PC-9 (cell line): ENCODE measurements at regions of chr10 and their contacts with region 1.

Region 1: DNA sequence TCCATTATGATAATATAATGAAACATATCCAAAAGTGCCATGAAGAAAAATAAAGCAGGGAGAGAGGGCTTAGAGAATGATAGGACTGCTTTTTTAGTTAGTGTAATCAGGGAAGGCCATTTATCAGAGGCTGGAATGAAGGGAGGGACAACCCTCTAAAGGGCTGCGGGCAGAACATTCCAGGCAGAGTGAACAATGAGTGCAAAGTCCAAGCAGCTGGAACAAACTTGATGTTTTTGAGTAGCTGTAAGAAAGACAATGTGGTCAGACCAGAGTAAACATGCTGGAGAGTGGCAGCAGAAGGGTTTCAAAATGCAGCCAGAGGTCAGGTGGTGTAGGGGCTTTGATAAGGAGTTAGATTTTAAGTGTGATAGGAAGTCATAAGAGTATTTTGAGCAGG is 65.6 kb upstream of the CCDC6 start:
- DNase-seq: peak; percentile 53 to 80
- H3K4me3 ChIP-seq: no peak overlapping the region
- H3K27ac ChIP-seq: peak overlapping the region; percentile 6; the same call in 1 of the 2 replicates
- H3K4me1 ChIP-seq: peaks cover 48% of the 10 kb centered on the region
- H3K27me3 ChIP-seq: no peaks in the 10 kb centered on the region
- CTCF ChIP-seq: no peak

Region 2: DNA sequence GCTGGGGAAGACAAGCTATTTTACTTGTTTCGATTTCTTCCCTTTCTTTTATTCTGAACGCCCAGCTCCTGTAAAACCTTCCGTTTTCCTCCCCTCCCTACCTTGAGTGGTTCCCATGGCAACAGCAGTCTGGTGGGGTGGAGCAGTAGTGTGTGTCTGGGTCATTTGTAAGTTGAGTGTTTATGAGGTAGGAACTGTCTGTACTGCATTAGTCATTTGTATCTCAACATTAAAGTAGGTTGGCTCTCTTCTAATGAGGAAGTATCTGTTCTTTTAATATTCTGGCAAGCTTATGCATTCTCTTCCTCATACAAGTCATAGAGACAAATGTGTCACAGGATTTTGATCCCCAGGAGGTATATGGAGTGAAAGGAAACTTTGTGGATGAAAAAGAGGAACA is 19.7 kb after region 1 on chr10:
- CTCF ChIA-PET with region 1: no interaction called
- POLR2A ChIA-PET with region 1: no interaction called
- intact Hi-C with region 1: loop called (anchors 1 kb)
- DNase-seq: peak; percentile 84 to 98
- H3K4me3 ChIP-seq: peak overlapping the region; percentile 38; the same call in 1 of the 2 replicates
- H3K27ac ChIP-seq: peak overlapping the region; percentile 91
- H3K4me1 ChIP-seq: peaks cover 37% of the 10 kb centered on the region
- H3K27me3 ChIP-seq: no peaks in the 10 kb centered on the region
- CTCF ChIP-seq: no peak

Region 3: GRCh38 chr10:60032723-60033122 is 60.8 kb after region 1 on chr10:
- CTCF ChIA-PET with region 1: interaction called, 8 read pairs
- POLR2A ChIA-PET with region 1: interaction called, 15 read pairs
- intact Hi-C with region 1: loop called (anchors 5 kb)
- DNase-seq: peak; percentile 41 to 64
- H3K4me3 ChIP-seq: no peak overlapping the region
- H3K27ac ChIP-seq: no peak overlapping the region
- H3K4me1 ChIP-seq: peaks cover 17% of the 10 kb centered on the region
- H3K27me3 ChIP-seq: no peaks in the 10 kb centered on the region
- CTCF ChIP-seq: peak; percentile 76

Region 4: GRCh38 chr10:60050366-60050765 is 78.5 kb after region 1 on chr10:
- CTCF ChIA-PET with region 1: no interaction called
- POLR2A ChIA-PET with region 1: no interaction called
- intact Hi-C with region 1: no loop called
- DNase-seq: no peak
- H3K4me3 ChIP-seq: no peak overlapping the region
- H3K27ac ChIP-seq: no peak overlapping the region
- H3K4me1 ChIP-seq: no peaks in the 10 kb centered on the region
- H3K27me3 ChIP-seq: no peaks in the 10 kb centered on the region
- CTCF ChIP-seq: no peak

Region 5: GRCh38 chr10:60414805-60415585 is 443.1 kb after region 1 on chr10:
- CTCF ChIA-PET with region 1: no interaction called
- POLR2A ChIA-PET with region 1: no interaction called
- intact Hi-C with region 1: loop called (anchors 2 kb)
- DNase-seq: peak; percentile 90 to 99
- H3K4me3 ChIP-seq: no peak overlapping the region; the same call in 1 of the 2 replicates
- H3K27ac ChIP-seq: peak overlapping the region; percentile 61
- H3K4me1 ChIP-seq: peaks cover 62% of the 10 kb centered on the region
- H3K27me3 ChIP-seq: no peaks in the 10 kb centered on the region
- CTCF ChIP-seq: no peak